ENCODE measurements at regions of chr3 and their contacts with region 1.

Region 1: DNA sequence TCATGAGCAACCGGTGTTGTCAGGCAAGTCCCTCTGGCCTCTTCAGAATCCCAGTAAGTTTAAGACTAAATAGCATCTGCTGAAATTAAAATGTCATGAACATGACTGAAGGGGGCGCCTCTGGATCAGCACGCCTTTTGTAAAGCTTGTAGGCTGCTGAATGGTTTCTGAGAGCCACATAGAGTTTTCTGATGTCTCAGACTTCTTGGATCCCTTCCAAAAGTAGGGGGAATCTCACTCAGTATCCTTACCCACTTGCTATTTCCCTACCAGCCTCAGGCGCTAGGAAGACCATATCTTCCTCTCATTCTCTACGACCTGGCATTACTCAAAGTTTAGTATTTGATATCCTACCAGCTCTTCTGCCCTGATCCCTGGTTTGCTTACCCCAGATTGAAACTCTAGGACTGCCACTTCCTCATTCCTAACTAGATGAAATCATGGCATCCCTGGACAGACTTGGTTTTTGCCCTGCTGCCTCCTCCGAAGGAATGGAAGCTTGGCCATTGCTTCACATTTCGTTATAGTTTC is 62.7 kb upstream of the CD47 start:
- DNase-seq: peak; percentile 35
- H3K4me3 Mint-ChIP-seq: no peak overlapping the region
- H3K27ac Mint-ChIP-seq: no peak overlapping the region
- H3K4me1 Mint-ChIP-seq: peaks cover 20% of the 10 kb centered on the region
- H3K27me3 Mint-ChIP-seq: no peaks in the 10 kb centered on the region

Region 2: GRCh38 chr3:108031897-108032296 is 121.6 kb before region 1 on chr3:
- intact Hi-C with region 1: no loop called
- DNase-seq: no peak
- H3K4me3 Mint-ChIP-seq: no peak overlapping the region
- H3K27ac Mint-ChIP-seq: no peak overlapping the region
- H3K4me1 Mint-ChIP-seq: peaks cover 8% of the 10 kb centered on the region
- H3K27me3 Mint-ChIP-seq: no peaks in the 10 kb centered on the region

Region 3: DNA sequence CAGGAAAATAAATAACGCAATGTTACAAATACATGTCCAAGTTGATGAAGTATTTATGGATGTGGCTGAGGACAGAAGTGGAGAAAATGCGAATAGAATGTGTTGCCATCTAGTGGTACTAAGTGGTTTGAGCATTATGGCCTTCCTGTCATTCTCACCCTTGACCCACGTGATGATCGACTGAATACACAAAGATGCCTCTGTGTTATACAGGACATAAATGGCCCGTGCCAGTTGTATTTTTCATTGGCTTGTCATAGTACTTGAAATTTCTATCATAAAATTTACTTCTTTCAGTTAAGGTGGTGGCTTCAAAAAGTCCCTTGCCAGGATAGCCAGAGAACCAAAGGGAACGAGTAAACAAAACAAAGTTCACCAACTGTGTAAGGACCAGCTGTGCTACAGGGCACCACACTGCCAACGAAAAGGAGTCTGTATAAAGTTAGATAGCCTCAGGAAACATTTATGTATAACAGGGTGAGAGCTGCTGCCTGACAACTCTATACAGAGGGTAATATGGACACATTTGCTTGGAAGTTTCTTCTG is 253.2 kb after region 1 on chr3:
- intact Hi-C with region 1: loop called (anchors 1 kb)
- DNase-seq: peak; percentile 9
- H3K4me3 Mint-ChIP-seq: no peak overlapping the region
- H3K27ac Mint-ChIP-seq: no peak overlapping the region
- H3K4me1 Mint-ChIP-seq: peaks cover 11% of the 10 kb centered on the region
- H3K27me3 Mint-ChIP-seq: no peaks in the 10 kb centered on the region